ENCODE measurements at regions of chr10 and their contacts with region 1.

Region 1: DNA sequence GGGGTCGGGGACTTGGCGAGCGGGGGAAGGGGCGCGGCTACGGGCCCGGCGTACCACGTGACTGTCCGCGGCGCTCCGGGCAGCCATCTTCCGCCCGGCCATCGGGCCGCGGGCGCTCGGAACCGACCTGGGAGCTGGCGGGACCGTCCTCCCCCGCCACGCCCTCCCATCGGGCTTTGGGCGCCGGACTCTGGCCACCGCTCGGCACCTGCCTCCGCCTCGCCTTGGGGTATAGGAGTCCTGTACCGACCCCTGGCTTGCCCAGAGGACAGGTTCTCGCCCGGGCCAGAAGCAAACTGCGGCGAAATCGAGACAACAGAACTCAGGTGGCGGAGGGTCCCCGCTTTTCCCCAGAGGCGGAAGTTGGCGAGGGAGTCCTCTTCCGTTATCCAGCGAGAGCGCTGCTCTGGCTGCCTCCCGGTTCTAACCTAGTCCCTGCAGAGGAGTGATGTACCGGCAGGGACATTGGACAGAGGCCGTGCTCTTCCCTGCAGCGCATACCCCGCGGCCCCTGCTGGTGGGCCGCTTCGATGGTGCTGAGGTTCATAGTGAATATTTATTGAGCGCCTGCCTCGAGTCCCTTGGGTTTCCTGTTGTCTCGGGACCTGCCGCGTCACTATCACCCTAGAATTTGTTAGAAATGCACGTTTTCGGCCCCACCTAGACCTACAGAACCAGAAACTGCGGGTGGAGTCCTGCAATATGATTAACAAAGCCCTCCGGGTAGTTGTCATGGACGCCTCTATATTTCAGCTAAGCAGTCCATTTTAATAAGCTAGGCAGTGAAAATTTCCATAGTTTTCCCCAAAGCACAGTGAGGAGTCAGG is 1.3 kb upstream of the SGMS1 start:
- DNase-seq: peak; percentile 87 to 94
- H3K4me3 ChIP-seq: peak overlapping the region; percentile 88
- H3K4me3 Mint-ChIP-seq: peak overlapping the region; percentile 78
- H3K27ac Mint-ChIP-seq: peak overlapping the region; percentile 93
- H3K4me1 ChIP-seq: peaks cover 11% of the 10 kb centered on the region; the same call in 1 of the 2 replicates
- H3K4me1 Mint-ChIP-seq: peaks cover 13% of the 10 kb centered on the region
- H3K27me3 ChIP-seq: no peaks in the 10 kb centered on the region
- H3K27me3 Mint-ChIP-seq: no peaks in the 10 kb centered on the region
- CTCF ChIP-seq: peak; percentile 78 to 82

Region 2: GRCh38 chr10:50367732-50368131 is 257.3 kb before region 1 on chr10:
- CTCF ChIA-PET with region 1: interaction called, 6 read pairs
- POLR2A ChIA-PET with region 1: no interaction called
- intact Hi-C with region 1: loop called (anchors 2 kb)
- DNase-seq: peak; percentile 52 to 67
- H3K4me3 ChIP-seq: no peak overlapping the region
- H3K4me3 Mint-ChIP-seq: no peak overlapping the region
- H3K27ac Mint-ChIP-seq: no peak overlapping the region
- H3K4me1 ChIP-seq: 0 out of 2 replicates have a peak, but pooled peaks cover 3% of the 10 kb centered on the region
- H3K4me1 Mint-ChIP-seq: no peaks in the 10 kb centered on the region
- H3K27me3 ChIP-seq: no peaks in the 10 kb centered on the region
- H3K27me3 Mint-ChIP-seq: no peaks in the 10 kb centered on the region
- CTCF ChIP-seq: peak; percentile 70 to 83

Region 3: DNA sequence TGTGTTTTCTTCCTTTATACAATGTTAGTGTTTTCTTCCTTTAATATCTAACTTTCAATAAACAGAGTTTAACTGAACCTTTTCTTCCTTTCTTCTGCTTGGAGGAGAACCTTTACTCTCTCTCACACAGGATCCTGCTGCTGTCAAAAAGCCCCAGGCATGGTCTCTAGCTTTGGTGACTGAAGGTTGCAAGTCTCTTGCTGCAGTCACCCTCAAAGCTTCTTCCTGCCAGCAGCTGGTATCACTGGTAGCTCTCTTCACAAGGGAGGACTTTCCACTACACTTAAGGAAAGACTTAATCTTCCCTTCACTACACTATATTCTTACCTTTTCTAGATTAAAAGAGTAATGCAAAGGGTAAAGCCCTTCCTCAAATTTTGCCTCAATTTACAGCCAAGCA is 154.7 kb before region 1 on chr10:
- CTCF ChIA-PET with region 1: no interaction called
- POLR2A ChIA-PET with region 1: no interaction called
- intact Hi-C with region 1: no loop called
- DNase-seq: no peak
- H3K4me3 ChIP-seq: no peak overlapping the region
- H3K4me3 Mint-ChIP-seq: no peak overlapping the region
- H3K27ac Mint-ChIP-seq: peak overlapping the region; percentile 11
- H3K4me1 ChIP-seq: peaks cover 9% of the 10 kb centered on the region
- H3K4me1 Mint-ChIP-seq: peaks cover 16% of the 10 kb centered on the region
- H3K27me3 ChIP-seq: no peaks in the 10 kb centered on the region
- H3K27me3 Mint-ChIP-seq: no peaks in the 10 kb centered on the region
- CTCF ChIP-seq: no peak

Region 4: GRCh38 chr10:50527442-50528043 is 97.5 kb before region 1 on chr10:
- CTCF ChIA-PET with region 1: no interaction called
- POLR2A ChIA-PET with region 1: no interaction called
- intact Hi-C with region 1: no loop called
- DNase-seq: no peak
- H3K4me3 ChIP-seq: no peak overlapping the region
- H3K4me3 Mint-ChIP-seq: no peak overlapping the region
- H3K27ac Mint-ChIP-seq: no peak overlapping the region
- H3K4me1 ChIP-seq: peaks cover 9% of the 10 kb centered on the region; the same call in 1 of the 2 replicates
- H3K4me1 Mint-ChIP-seq: peaks cover 23% of the 10 kb centered on the region
- H3K27me3 ChIP-seq: no peaks in the 10 kb centered on the region
- H3K27me3 Mint-ChIP-seq: no peaks in the 10 kb centered on the region
- CTCF ChIP-seq: no peak

Region 5: DNA sequence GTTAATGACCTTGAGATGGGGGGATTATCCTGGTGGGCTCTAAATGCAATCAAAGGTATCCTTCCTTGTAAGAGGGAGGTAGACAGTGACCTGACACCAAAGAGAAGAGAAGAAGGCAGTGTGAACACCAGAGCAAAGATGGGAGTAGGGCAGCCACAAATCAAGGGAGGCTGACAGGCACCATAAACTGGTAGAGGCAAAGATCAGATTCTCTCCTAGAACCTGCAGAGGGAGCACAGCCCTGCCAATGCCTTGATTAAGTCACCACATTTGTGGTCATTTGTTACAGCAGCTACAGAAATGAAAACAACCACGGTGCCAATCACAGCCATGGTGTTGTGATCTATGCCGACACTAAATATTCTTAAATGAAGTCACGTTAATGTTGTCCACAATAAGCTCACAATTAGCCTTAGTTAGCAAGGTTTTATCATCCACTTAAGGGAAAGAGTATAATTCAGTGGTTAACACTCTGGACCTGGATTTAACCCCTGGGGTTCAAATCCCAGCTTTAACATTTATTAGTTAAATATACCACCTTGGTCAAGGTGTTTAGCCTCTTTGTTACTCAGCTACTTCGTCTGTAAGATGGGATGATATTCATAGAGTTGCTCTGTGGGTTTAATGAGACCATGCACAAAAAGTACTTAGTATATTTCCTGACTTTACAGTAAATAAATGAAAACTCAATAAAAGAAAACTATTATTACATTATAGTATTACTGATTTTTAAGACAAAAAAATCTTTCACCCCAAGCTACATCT is 72.1 kb before region 1 on chr10:
- CTCF ChIA-PET with region 1: interaction called, 8 read pairs
- POLR2A ChIA-PET with region 1: interaction called, 6 read pairs
- intact Hi-C with region 1: loop called (anchors 1 kb)
- DNase-seq: peak; percentile 65 to 67
- H3K4me3 ChIP-seq: no peak overlapping the region
- H3K4me3 Mint-ChIP-seq: no peak overlapping the region
- H3K27ac Mint-ChIP-seq: no peak overlapping the region
- H3K4me1 ChIP-seq: peaks cover 21% of the 10 kb centered on the region
- H3K4me1 Mint-ChIP-seq: peaks cover 19% of the 10 kb centered on the region
- H3K27me3 ChIP-seq: no peaks in the 10 kb centered on the region
- H3K27me3 Mint-ChIP-seq: no peaks in the 10 kb centered on the region
- CTCF ChIP-seq: peak; percentile 53 to 64

Region 6: GRCh38 chr10:50577681-50578350 is 47.3 kb before region 1 on chr10:
- CTCF ChIA-PET with region 1: interaction called, 12 read pairs
- POLR2A ChIA-PET with region 1: interaction called, 8 read pairs
- intact Hi-C with region 1: loop called (anchors 1 kb)
- DNase-seq: peak; percentile 55 to 76
- H3K4me3 ChIP-seq: no peak overlapping the region
- H3K4me3 Mint-ChIP-seq: peak overlapping the region; percentile 65
- H3K27ac Mint-ChIP-seq: peak overlapping the region; percentile 82
- H3K4me1 ChIP-seq: peaks cover 60% of the 10 kb centered on the region
- H3K4me1 Mint-ChIP-seq: peaks cover 72% of the 10 kb centered on the region
- H3K27me3 ChIP-seq: no peaks in the 10 kb centered on the region
- H3K27me3 Mint-ChIP-seq: no peaks in the 10 kb centered on the region
- CTCF ChIP-seq: no peak

Region 7: GRCh38 chr10:50613150-50613549 is 11.9 kb before region 1 on chr10:
- CTCF ChIA-PET with region 1: interaction called, 10 read pairs
- POLR2A ChIA-PET with region 1: no interaction called
- intact Hi-C with region 1: loop called (anchors 1 kb)
- DNase-seq: peak in 1 of 2 experiments; percentile 29
- H3K4me3 ChIP-seq: no peak overlapping the region
- H3K4me3 Mint-ChIP-seq: no peak overlapping the region
- H3K27ac Mint-ChIP-seq: peak overlapping the region; percentile 4
- H3K4me1 ChIP-seq: peaks cover 17% of the 10 kb centered on the region
- H3K4me1 Mint-ChIP-seq: peaks cover 23% of the 10 kb centered on the region
- H3K27me3 ChIP-seq: no peaks in the 10 kb centered on the region
- H3K27me3 Mint-ChIP-seq: no peaks in the 10 kb centered on the region
- CTCF ChIP-seq: no peak